Head of caudate nucleus (tissue), 42 donors: ENCODE measurements at regions of chr6 and their contacts with region 1.

Region 1: DNA sequence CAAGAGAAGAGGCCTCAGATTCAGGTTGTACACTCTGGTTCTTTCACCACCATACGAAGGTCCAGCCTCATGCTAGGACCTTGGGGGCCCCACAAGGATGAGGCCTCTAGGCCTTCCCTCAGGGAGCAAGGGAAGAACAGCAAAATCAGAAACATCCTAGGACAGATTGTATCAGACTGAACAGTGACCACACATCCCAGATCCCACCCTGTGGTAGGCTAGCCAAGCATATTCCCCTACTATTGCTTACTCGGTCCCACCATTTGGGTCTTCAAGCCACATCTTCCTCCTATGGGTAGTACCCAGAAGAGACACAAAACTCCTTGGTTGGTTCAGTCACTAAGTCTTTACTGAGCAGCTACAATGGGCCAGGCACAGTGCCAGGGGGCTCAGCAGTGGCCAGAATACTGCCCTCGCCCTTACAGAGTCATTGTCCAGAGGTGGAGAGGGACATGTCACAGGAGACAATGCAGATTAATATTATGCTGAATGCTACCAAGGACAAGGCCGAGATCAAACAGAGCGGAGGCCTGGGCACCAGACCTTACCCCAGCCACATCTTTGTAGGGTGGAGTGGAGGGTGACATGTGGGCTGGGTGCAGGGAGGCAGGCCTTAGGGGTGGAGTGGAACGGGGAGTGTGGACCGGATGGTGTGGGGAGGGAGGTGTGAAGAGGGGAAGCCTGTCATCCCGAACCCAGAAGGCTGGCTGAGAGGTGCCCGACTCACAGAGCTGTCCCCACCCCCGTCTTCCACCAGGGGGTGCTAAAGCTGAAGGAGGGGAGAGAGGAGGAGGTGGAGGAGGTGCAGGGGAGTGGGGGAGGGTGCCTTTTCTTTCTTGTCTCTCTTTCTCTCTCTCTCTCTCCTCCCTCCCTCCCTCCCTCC is 6.8 kb upstream of the MAPK13 start:
- DNase-seq: peak; percentile 60 to 91 (median 81)

Region 2: DNA sequence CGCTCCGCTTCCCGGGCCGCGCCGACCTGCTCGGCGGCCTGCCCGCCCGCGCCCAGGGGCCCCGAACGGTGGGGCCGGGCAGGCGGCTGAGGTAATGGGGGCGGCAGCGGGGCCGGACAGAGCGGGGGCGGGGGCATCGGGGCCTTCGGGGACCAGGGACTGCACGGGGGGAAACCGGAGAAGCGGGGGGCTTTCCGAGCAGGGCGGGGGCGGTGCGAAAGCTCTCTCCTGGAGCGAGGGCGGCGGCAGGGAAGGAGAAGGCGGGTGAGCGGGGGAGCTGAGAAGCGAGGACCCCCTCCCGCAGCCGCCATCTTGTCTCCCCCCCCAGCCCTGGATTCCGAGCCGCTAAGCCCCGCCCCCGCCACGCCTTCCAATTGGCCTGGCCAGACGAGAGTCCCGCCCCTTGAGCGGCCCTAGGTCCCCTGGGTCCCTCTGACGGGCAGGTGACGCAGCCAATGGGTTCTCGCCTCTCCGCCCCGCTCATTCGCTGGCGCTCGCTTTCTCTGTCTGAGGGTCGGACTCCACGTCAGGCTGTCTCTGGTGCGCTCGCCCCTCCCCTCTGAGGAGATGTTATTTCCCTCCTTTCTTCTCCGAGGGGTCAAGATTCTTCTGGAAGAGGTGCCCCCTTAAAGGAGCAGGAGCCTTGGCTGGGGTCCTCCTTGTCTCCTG is 73.5 kb after region 1 on chr6:
- intact Hi-C with region 1: loop called (anchors 5 kb)
- DNase-seq: peak; percentile 99 to 100 (median 100)

Region 3: DNA sequence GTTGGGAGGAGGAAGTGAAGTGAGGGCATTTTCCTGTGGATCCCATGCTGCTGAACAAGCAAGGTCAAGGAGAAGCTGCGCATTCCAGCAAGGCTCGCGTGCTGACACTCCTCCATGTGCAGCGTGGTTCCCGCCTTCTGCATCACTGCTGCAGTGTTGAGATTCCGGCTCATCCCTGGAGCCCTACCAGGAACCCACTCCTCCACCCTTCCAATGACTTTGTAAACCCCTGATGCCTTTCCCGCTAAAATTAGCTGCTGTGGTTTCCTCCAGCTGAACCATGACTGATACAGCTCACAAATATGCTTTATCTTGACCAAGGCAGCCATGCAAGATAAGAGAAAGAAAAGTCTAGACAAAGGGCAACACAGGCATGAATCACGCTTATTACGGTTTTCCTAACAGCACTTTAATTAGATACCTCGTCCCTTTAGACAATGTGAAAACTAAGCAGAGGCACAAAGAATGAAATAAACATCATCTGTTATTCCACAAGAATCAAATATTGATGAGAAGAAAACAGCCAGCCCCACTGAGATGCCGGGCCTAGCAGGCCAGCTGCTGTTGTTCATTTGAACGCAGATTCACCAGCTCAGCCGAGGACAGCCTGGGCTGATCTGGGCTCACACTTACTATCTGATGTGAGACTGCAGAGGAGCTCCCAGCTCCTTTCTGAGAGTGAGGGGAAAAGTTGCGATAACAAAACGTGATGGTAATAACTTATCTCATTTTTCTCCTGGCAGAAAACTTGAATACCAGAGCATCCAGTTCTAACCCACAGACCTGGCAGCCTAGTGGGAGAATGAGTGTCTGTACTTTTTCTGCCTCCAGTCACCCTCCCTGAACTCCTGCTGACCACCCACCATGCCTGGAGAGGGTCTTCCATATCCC is 227.4 kb after region 1 on chr6:
- intact Hi-C with region 1: loop called (anchors 10 kb)
- DNase-seq: no peak

Region 4: DNA sequence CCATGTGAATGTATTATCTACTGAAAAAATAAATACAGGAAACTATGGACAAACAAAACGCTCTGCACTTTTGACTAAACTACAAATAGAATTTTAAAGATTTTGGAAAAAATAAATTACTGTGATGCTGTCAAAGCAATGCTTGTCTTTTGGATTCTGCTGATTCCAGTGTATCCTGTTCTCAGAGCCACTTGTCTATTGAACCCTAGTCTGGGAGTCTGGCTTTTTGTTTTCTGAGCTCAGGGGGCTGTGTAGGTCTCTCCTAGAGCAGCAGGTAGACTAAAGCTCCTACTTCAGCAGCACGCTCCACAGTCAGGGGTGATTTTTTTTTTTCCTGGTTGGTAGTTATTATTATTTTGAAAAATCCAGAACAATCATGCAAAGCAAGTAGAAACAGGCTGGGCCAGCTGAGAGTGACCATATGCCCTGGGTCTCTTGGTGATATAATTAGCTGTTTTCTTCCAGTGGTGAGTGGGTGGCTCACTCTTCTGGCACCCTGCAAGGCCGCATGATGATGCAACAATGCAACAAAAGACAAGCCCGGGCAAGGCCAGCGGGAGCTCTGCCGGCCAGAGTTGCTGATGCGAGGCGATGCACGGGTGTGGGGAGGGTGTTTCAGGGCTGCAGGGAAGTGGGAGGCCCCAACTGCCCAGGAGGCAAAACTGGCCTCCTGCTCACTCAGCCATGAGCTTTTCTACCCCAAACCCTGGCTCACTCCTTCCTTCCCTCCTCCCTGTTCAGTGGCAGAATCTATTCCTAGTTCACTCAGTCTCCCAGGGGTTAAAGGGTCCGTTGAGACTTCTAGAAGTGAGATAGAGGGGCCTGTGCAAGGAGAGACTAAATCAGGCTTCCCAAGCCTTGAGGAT is 543.5 kb after region 1 on chr6:
- intact Hi-C with region 1: no loop called
- DNase-seq: peak; percentile 45 to 92 (median 72)